Dorsolateral prefrontal cortex (tissue), 120 donors: ENCODE measurements at regions of chr12 and their contacts with region 1.

Region 1: GRCh38 chr12:69662764-69663163 is 36.3 kb downstream of the BEST3 start:
- DNase-seq: no peak
- H3K4me3 ChIP-seq: no peak overlapping the region
- H3K27ac ChIP-seq: no peak overlapping the region
- H3K27me3 ChIP-seq: no peaks in the 10 kb centered on the region
- CTCF ChIP-seq: no peak

Region 2: GRCh38 chr12:69837191-69837590 is 174.4 kb after region 1 on chr12:
- intact Hi-C with region 1: loop called in 1 of 2 experiments (anchors 10 kb)
- DNase-seq: peak in 1 of 10 donors; percentile 14
- H3K4me3 ChIP-seq: no peak overlapping the region
- H3K27ac ChIP-seq: peak overlapping the region in 5 of 59 donors; percentile 8 to 34 (median 10)
- H3K27me3 ChIP-seq: peaks cover 0 to 6% (median 0%) of the 10 kb centered on the region in 45 donors
- CTCF ChIP-seq: peak in 8 of 56 donors; percentile 9 to 45 (median 18)